ENCODE measurements at regions of chr9 and their contacts with region 1.

Region 1: DNA sequence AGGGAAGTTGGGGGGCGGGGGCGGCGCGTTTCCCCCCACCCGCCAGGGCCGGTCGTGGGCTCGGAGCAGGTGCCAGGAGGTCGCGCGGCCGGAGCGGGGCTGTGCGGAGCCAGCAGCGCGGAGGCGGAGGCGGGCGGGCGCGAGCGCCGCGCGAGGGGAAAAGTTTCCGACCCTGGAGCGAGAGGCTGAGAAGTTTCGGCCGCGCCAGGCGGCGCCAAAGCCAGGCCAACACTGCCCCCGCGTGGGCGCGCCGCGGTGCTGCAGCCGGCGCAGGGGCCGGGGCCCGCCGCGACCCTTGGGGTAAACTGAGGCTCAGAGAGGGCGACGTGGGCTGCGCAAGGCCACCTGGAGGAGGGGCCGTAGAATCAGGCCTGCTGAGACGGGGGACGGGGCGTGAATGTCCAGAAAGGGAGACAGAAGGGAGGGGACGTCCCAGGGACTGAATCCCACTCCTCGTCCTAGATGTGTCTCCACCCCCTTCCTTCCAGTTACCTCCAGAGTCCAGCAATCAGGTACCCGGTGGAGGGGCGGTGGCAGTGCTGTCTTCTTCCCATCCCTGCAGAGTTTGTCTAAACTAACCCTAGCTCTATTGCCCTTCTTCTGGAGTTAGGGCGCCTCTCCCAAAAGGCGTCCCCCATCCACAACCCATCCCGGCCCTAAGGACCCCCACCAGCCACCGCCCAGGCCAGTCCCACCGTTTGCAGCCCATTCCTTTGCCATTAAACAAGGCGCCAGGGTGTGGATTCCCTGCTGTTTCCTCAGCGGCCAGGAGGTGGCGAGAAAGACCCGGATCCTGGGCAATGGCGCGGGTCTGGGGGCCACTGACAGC is 10.2 kb downstream of the C9orf50 start:
- DNase-seq: peak in 9 of 10 donors; percentile 64 to 81 (median 76)
- H3K4me3 ChIP-seq: peak overlapping the region; percentile 40 to 70 (median 60)
- H3K27ac ChIP-seq: peak overlapping the region; percentile 5 to 97 (median 92)
- H3K27me3 ChIP-seq: no peaks in the 10 kb centered on the region
- CTCF ChIP-seq: peak; percentile 59 to 99 (median 86)

Region 2: GRCh38 chr9:129139993-129140396 is 470.7 kb before region 1 on chr9:
- intact Hi-C with region 1: loop called (anchors 1 kb)
- DNase-seq: peak; percentile 59 to 95 (median 86)
- H3K4me3 ChIP-seq: peak overlapping the region; percentile 13 to 66 (median 47)
- H3K27ac ChIP-seq: peak overlapping the region; percentile 98 to 100 (median 100)
- H3K27me3 ChIP-seq: no peaks in the 10 kb centered on the region
- CTCF ChIP-seq: peak in 16 of 56 donors; percentile 6 to 38 (median 17)

Region 3: DNA sequence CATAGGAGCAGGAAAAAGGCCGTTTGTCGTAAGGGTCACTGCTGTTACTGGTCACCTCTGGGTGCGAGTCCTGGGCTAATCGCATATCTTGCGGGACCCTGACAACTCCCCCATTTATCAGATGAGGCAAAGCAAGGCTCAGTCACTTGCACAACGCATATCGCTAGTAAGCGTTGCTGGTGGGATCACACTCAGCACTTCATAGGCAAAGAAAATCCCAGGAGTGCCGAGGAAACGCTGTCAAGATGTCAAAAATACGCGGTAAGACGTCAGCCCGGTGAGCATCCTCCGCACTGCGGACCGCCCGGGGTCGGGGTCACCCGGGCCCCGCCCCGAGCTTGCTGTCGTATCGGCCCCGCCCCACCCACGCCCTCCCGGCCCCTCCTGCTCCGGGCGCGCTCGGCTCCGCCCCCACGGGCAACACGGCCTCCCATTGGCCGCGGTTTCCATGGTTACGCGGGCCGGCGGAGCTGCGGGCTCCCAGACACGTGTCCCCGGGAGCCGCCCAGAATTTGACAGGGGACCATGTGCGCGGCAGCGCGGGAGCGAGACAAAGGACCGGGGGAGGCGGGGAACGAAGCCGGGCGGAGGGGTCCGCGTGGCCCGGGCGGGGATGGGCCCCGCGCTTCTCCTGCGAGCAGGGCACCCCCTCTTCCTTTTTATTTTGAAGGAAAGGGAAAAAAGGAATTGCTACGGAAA is 352.4 kb before region 1 on chr9:
- intact Hi-C with region 1: loop called in 1 of 2 experiments (anchors 5 kb)
- DNase-seq: peak; percentile 85 to 97 (median 94)
- H3K4me3 ChIP-seq: peak overlapping the region; percentile 18 to 66 (median 52)
- H3K27ac ChIP-seq: peak overlapping the region in 50 of 59 donors; percentile 2 to 86 (median 64)
- H3K27me3 ChIP-seq: no peaks in the 10 kb centered on the region
- CTCF ChIP-seq: no peak

Region 4: DNA sequence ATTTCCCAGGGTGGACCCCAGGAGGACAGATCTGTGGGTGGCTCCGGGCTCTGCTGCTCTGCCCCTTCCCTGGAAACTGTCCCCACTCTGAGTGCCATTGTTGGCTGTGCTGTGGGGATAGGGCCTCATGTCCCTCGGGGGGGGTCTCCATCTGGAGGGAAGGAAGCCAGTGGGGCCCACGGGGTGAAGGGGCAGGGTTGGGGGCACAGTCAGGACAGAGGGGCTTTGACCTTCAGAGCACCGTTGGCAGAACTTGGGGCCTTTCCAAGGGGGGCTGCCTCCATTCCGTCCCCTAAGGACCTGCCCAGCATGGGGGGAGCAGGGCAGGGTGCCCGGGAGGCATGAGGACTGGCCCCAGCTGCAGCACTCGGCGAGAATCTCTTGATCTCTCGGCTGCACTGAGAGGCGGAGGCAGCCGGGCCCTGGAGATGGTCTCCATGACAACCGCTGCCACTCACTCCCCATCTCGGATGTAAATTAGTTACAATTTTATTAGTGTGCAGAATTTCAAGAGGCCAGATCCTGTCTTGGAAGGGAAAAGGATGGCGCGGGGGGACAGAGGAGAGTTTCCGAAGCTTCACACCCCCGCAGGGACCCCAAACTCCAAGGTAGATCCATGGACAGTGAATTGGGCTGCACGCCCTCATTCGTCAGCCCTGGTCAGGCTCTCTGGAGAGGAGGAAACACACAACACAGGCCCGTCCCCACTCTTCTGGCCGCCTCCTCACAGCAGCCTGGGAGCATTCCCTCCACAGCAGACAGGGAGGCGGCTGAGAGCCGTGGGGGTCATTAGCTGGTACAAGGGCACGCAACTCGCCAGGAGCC is 216.4 kb before region 1 on chr9:
- intact Hi-C with region 1: no loop called
- DNase-seq: peak in 8 of 10 donors; percentile 60 to 82 (median 75)
- H3K4me3 ChIP-seq: peak overlapping the region in 17 of 59 donors; percentile 2 to 26 (median 16)
- H3K27ac ChIP-seq: peak overlapping the region in 56 of 59 donors; percentile 22 to 94 (median 82)
- H3K27me3 ChIP-seq: no peaks in the 10 kb centered on the region
- CTCF ChIP-seq: no peak

Region 5: GRCh38 chr9:129413537-129414376 is 196.9 kb before region 1 on chr9:
- intact Hi-C with region 1: loop called in 1 of 2 experiments (anchors 5 kb)
- DNase-seq: peak; percentile 97 to 99 (median 98)
- H3K4me3 ChIP-seq: peak overlapping the region; percentile 47 to 89 (median 71)
- H3K27ac ChIP-seq: peak overlapping the region; percentile 91 to 100 (median 99)
- H3K27me3 ChIP-seq: no peaks in the 10 kb centered on the region
- CTCF ChIP-seq: peak in 13 of 56 donors; percentile 8 to 50 (median 21)

Region 6: DNA sequence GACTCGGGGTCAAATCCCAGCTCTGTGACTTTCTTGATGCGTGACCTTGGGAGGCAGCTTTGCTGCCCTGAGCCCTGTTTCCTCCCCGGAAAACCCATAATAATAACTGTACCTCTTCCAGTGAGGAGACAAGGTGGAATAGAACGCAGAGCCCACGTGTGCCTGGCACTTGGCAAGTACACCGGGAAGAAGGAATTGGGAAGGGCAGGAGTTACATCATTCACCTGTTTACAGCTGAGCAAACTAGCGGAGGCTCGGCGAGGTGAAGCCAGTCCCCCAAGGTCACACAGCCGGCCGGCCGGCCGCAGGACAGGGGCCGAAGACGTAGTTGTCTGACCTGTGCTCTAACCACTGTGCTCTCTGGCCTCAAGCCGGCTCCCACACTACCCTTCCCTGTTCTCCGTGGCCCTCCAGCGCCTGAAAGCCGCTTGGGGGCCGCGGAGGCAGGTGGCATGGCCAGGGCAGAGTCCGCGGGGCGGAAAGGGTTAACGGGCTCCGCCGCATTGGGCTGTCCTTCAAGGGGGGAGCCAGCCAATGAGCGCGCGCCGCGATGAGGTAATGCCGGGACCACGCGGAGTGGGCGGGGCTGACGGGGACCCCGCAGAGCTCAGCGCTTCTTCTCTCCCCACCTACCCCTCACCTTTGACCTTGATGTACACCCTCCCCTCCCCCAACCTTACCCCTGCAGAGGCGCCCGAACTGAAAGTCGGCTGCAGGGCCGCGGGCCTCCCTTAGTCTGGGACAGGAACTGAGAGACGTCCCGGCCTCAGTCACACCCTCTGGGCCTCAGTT is 115.0 kb before region 1 on chr9:
- intact Hi-C with region 1: loop called (anchors 5 kb)
- DNase-seq: peak; percentile 93 to 98 (median 96)
- H3K4me3 ChIP-seq: peak overlapping the region; percentile 48 to 92 (median 72)
- H3K27ac ChIP-seq: peak overlapping the region; percentile 88 to 100 (median 99)
- H3K27me3 ChIP-seq: no peaks in the 10 kb centered on the region
- CTCF ChIP-seq: peak in 2 of 56 donors; percentile 10 to 11

Region 7: GRCh38 chr9:129569502-129570449 is 40.9 kb before region 1 on chr9:
- intact Hi-C with region 1: loop called in 1 of 2 experiments (anchors 5 kb)
- DNase-seq: peak in 1 of 10 donors; percentile 15
- H3K4me3 ChIP-seq: peak overlapping the region in 34 of 59 donors; percentile 48 to 78 (median 65)
- H3K27ac ChIP-seq: peak overlapping the region; percentile 45 to 96 (median 91)
- H3K27me3 ChIP-seq: no peaks in the 10 kb centered on the region
- CTCF ChIP-seq: peak in 21 of 56 donors; percentile 9 to 40 (median 23)